Caco-2 (cell line): ENCODE measurements at regions of chr1 and their contacts with region 1.

Region 1: GRCh38 chr1:176073524-176074157 is 133.4 kb downstream of the COP1 start:
- DNase-seq: peak; percentile 48 to 71
- H3K4me3 ChIP-seq: no peak overlapping the region
- H3K4me3 Mint-ChIP-seq: no peak overlapping the region
- H3K27ac Mint-ChIP-seq: no peak overlapping the region
- H3K4me1 ChIP-seq: peaks cover 20% of the 10 kb centered on the region
- H3K4me1 Mint-ChIP-seq: peaks cover 13% of the 10 kb centered on the region
- H3K27me3 ChIP-seq: no peaks in the 10 kb centered on the region
- H3K27me3 Mint-ChIP-seq: no peaks in the 10 kb centered on the region
- CTCF ChIP-seq: peak; percentile 56 to 67

Region 2: DNA sequence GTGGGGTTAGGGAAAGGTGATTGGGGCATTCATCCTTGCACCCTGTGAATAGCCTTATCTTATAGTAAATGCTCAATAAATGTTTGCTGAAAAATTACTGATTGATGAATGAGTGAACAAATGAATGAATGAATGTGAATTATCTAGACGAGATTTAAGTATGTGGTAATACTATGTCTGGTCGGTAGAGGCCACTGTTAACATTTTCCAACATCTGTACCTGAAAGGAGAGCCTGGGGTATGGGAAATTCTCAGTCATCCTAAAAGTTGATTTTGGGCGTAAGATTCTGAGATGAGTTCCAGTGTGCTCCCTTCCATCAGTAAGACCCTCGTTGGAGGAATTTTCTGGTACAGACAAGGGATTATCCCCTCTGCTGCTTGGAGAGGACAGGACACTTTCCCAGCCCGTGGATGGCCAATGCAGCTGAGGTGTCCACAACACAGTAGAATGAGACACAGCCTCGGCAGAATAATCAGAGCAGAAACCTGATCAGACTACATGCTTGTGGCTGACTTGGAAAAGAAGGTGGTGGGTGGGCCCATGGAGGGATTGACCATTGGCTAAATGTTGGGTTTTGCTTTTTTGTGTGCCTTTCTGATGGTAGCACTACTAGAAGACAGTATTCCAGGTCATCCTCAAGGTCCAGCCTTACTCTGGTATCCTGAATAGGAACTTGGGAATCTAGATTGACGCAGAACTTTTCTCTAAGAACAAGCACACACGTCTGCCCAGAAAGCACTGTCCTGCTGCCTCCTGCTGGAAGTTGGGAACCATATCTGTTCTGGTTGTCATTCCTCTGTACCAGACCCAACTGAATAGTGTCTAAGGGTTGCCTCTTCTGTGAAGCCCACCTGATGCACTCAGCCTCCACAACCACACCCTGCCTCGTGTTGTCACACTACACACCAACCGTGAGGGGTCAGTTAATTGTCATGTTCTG is 592.2 kb before region 1 on chr1:
- CTCF ChIA-PET with region 1: no interaction called
- POLR2A ChIA-PET with region 1: no interaction called
- intact Hi-C with region 1: loop called (anchors 1 kb)
- DNase-seq: peak in 1 of 2 experiments; percentile 24
- H3K4me3 ChIP-seq: no peak overlapping the region
- H3K4me3 Mint-ChIP-seq: no peak overlapping the region
- H3K27ac Mint-ChIP-seq: no peak overlapping the region
- H3K4me1 ChIP-seq: no peaks in the 10 kb centered on the region
- H3K4me1 Mint-ChIP-seq: no peaks in the 10 kb centered on the region
- H3K27me3 ChIP-seq: no peaks in the 10 kb centered on the region; the same call in 1 of the 2 replicates
- H3K27me3 Mint-ChIP-seq: peaks cover 17% of the 10 kb centered on the region
- CTCF ChIP-seq: peak; percentile 48 to 53

Region 3: GRCh38 chr1:175763797-175764196 is 309.8 kb before region 1 on chr1:
- CTCF ChIA-PET with region 1: no interaction called
- POLR2A ChIA-PET with region 1: interaction called, 4 read pairs
- intact Hi-C with region 1: loop called (anchors 10 kb)
- DNase-seq: no peak
- H3K4me3 ChIP-seq: no peak overlapping the region
- H3K4me3 Mint-ChIP-seq: no peak overlapping the region
- H3K27ac Mint-ChIP-seq: no peak overlapping the region
- H3K4me1 ChIP-seq: no peaks in the 10 kb centered on the region
- H3K4me1 Mint-ChIP-seq: no peaks in the 10 kb centered on the region
- H3K27me3 ChIP-seq: no peaks in the 10 kb centered on the region
- H3K27me3 Mint-ChIP-seq: peaks cover 2% of the 10 kb centered on the region
- CTCF ChIP-seq: no peak

Region 4: GRCh38 chr1:175839678-175840669 is 233.7 kb before region 1 on chr1:
- CTCF ChIA-PET with region 1: no interaction called
- POLR2A ChIA-PET with region 1: no interaction called
- intact Hi-C with region 1: no loop called
- DNase-seq: peak; percentile 51 to 75
- H3K4me3 ChIP-seq: peak overlapping the region; percentile 27
- H3K4me3 Mint-ChIP-seq: peak overlapping the region; percentile 78
- H3K27ac Mint-ChIP-seq: peak overlapping the region; percentile 24
- H3K4me1 ChIP-seq: peaks cover 32% of the 10 kb centered on the region
- H3K4me1 Mint-ChIP-seq: peaks cover 42% of the 10 kb centered on the region
- H3K27me3 ChIP-seq: no peaks in the 10 kb centered on the region
- H3K27me3 Mint-ChIP-seq: peaks cover 4% of the 10 kb centered on the region
- CTCF ChIP-seq: no peak

Region 5: DNA sequence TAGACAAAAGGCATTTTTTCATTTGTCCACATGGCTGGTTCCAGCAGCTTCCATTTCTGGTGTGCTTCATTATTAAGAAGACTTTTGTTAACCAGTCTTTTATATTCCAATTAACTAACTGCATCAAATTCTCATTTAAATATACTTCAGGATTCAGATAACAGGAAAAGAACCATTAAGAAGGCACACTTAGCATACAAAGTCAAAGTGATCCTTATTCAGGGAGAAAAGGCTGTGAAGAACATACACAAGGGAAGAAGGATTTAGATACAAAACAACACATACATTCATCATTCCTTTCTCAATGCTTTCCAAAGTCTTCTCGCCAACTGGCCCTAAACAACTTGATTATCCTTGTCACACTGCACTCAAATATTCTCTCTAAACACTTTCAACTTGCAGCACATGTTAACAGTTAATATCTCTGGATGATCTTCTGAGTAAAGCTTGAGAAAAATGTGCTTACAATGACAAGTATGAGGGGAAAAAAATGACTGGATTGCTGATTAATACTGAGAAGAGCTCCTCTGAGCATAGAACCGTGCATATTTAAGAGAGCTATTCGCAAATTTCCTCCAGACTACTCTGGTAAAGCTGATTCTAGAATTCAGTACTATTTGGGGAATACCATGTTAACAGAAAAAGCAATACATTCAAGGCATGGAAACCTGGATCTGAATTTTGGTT is 105.0 kb before region 1 on chr1:
- CTCF ChIA-PET with region 1: no interaction called
- POLR2A ChIA-PET with region 1: no interaction called
- intact Hi-C with region 1: loop called (anchors 5 kb)
- DNase-seq: no peak
- H3K4me3 ChIP-seq: no peak overlapping the region
- H3K4me3 Mint-ChIP-seq: no peak overlapping the region
- H3K27ac Mint-ChIP-seq: no peak overlapping the region
- H3K4me1 ChIP-seq: peaks cover 31% of the 10 kb centered on the region
- H3K4me1 Mint-ChIP-seq: no peaks in the 10 kb centered on the region
- H3K27me3 ChIP-seq: no peaks in the 10 kb centered on the region
- H3K27me3 Mint-ChIP-seq: no peaks in the 10 kb centered on the region
- CTCF ChIP-seq: no peak

Region 6: GRCh38 chr1:176058686-176059085 is 15.0 kb before region 1 on chr1:
- CTCF ChIA-PET with region 1: no interaction called
- POLR2A ChIA-PET with region 1: no interaction called
- intact Hi-C with region 1: loop called (anchors 1 kb)
- DNase-seq: peak; percentile 81 to 91
- H3K4me3 ChIP-seq: no peak overlapping the region
- H3K4me3 Mint-ChIP-seq: peak overlapping the region; percentile 35
- H3K27ac Mint-ChIP-seq: peak overlapping the region; percentile 15
- H3K4me1 ChIP-seq: peaks cover 36% of the 10 kb centered on the region
- H3K4me1 Mint-ChIP-seq: peaks cover 22% of the 10 kb centered on the region
- H3K27me3 ChIP-seq: no peaks in the 10 kb centered on the region
- H3K27me3 Mint-ChIP-seq: no peaks in the 10 kb centered on the region
- CTCF ChIP-seq: no peak